Natural killer cell (primary cell): ENCODE measurements at regions of chr11 and their contacts with region 1.

Region 1: DNA sequence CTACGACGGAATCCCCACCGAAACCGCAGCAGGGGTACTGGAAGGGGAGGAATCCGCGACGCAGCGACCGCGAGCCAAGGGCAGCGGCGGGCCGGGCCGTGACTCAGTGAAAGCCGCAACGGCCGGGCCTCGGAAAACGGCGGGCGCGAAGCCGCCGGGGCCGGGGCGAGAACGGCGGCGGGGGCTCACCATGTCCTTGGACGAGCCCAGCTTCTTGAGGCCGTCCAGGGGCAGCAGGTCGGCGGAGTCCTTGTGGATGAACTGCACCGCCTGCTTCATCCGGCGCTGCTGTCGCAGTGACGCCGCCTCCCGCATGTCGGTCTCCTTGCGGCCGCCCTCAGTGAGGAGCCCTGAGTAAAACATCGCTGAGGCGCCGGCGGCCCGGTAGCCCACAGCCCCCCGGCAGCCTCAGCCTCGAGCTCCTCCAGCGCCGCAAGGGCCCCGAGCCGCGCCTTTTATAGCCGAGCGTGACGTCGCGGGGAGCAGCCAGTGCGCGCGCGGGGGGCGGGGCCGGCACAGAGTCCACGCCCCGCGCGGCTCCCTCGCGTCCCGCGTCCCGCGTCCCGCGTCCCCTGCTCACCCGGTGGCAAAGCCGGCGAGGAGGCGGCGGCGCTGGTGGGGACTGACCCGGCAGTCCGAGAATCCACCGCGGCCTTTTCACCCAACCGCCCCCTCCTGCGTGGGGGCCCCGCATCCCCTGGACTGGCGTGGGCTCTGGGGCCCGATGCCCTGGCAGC is at the start of gene NRIP3:
- DNase-seq: peak; percentile 80 to 91
- ATAC-seq: peak; percentile 79 to 86 (median 86)
- H3K4me3 ChIP-seq: peak within 1 kb of the TSS; percentile 35
- H3K4me3 Mint-ChIP-seq: peak within 1 kb of the TSS; percentile 89
- H3K27ac ChIP-seq: no peak within 1 kb of the TSS
- H3K27ac Mint-ChIP-seq: peak within 1 kb of the TSS in 1 of 2 donors; percentile 81
- H3K4me1 ChIP-seq: peaks cover 13% of the 10 kb centered on the region
- H3K4me1 Mint-ChIP-seq: peaks cover 6 to 18% of the 10 kb centered on the region in 2 donors
- H3K27me3 ChIP-seq: peaks cover 32% of the 10 kb centered on the region
- H3K27me3 Mint-ChIP-seq: peaks cover 30 to 48% of the 10 kb centered on the region in 2 donors
- CTCF ChIP-seq: no peak
- total RNA-seq, gene NRIP3: 2.3 to 6.1 (median 4.6) TPM

Region 2: DNA sequence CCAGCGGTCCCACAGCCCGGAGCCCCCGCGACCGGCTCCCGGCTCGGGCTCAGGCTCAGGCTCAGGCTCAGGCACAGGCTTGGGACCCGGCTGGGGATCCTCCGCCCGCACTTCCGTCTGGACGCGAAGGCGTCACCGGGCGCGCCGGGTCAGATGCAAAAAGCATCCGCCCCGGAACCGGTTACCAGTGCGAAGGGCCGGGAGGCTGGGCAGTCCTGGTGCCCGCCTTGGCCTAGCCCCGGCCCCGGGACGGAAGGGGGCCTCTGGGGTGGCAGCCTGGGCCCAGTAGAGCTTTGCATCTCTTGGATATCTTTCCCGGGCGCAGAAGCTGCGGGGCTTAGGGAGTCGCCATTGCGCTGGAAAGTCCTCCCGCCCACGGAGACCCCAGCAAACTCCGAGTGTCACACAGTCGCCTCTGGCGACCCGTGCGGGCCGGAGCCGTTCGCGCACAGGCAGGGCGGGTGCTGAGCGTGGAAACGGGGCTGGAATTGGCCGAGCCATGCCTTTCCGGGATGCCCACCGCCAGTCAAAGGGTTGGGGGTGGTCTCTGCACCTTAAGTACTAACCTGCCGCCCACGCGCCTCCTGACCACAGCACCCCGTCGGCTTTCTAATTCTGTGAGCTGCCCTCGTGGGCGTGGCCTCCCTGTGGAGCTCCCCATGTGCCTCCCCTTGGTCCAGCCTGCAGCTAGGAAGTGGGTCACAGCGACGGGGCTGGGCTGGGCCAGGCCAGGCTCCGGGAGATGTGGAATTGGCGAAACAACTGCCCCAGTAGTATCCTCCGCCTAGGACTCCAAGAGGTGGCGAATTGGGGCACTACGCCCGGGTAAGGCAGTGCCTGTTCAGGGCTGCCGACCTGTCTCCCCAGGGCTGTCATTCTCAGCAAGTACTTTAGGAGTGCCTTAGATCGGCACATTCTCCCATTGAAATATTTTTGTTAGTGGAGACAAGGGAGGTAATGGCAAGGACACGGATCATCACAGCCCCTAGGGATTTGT is 39.1 kb before region 1 on chr11 and contains the start of gene TMEM9B:
- intact Hi-C with region 1: loop called (anchors 2 kb)
- DNase-seq: peak; percentile 73 to 85
- ATAC-seq: peak; percentile 79 to 91 (median 86)
- H3K4me3 ChIP-seq: peak within 1 kb of the TSS; percentile 97
- H3K4me3 Mint-ChIP-seq: peak within 1 kb of the TSS; percentile 95
- H3K27ac ChIP-seq: peak within 1 kb of the TSS; percentile 98
- H3K27ac Mint-ChIP-seq: peak within 1 kb of the TSS; percentile 91 to 96
- H3K4me1 ChIP-seq: peaks cover 19% of the 10 kb centered on the region
- H3K4me1 Mint-ChIP-seq: peaks cover 23 to 31% of the 10 kb centered on the region in 2 donors
- H3K27me3 ChIP-seq: no peaks in the 10 kb centered on the region
- H3K27me3 Mint-ChIP-seq: no peaks in the 10 kb centered on the region
- CTCF ChIP-seq: no peak
- total RNA-seq, gene TMEM9B: 46.5 to 55.2 (median 51.4) TPM

Region 3: GRCh38 chr11:9512370-9513019 is 508.8 kb after region 1 on chr11:
- intact Hi-C with region 1: loop called (anchors 5 kb)
- DNase-seq: no peak
- ATAC-seq: no peak
- H3K4me3 ChIP-seq: no peak overlapping the region
- H3K4me3 Mint-ChIP-seq: no peak overlapping the region
- H3K27ac ChIP-seq: no peak overlapping the region
- H3K27ac Mint-ChIP-seq: no peak overlapping the region
- H3K4me1 ChIP-seq: peaks cover 7% of the 10 kb centered on the region
- H3K4me1 Mint-ChIP-seq: peaks cover 12 to 16% of the 10 kb centered on the region in 2 donors
- H3K27me3 ChIP-seq: no peaks in the 10 kb centered on the region
- H3K27me3 Mint-ChIP-seq: no peaks in the 10 kb centered on the region
- CTCF ChIP-seq: no peak

Region 4: GRCh38 chr11:9757809-9758636 is 754.3 kb after region 1 on chr11:
- intact Hi-C with region 1: loop called (anchors 5 kb)
- DNase-seq: peak; percentile 92 to 97
- ATAC-seq: peak; percentile 87 to 96 (median 94)
- H3K4me3 ChIP-seq: peak overlapping the region; percentile 71
- H3K4me3 Mint-ChIP-seq: peak overlapping the region; percentile 87
- H3K27ac ChIP-seq: peak overlapping the region; percentile 58
- H3K27ac Mint-ChIP-seq: peak overlapping the region; percentile 83 to 84
- H3K4me1 ChIP-seq: peaks cover 40% of the 10 kb centered on the region
- H3K4me1 Mint-ChIP-seq: peaks cover 16 to 30% of the 10 kb centered on the region in 2 donors
- H3K27me3 ChIP-seq: no peaks in the 10 kb centered on the region
- H3K27me3 Mint-ChIP-seq: no peaks in the 10 kb centered on the region
- CTCF ChIP-seq: peak; percentile 91